ENCODE measurements at regions of chr1 and their contacts with region 1.

Region 1: GRCh38 chr1:27203946-27204345 is 30.5 kb upstream of the WDTC1 start:
- DNase-seq: no peak
- H3K4me3 ChIP-seq: no peak overlapping the region
- H3K27ac ChIP-seq: no peak overlapping the region
- H3K4me1 ChIP-seq: peaks cover 0 to 3% (median 0%) of the 10 kb centered on the region in 4 experiments
- H3K27me3 ChIP-seq: no peaks in the 10 kb centered on the region

Region 2: GRCh38 chr1:27284425-27285273 is 80.7 kb after region 1 on chr1:
- CTCF ChIA-PET with region 1: interaction called, 10 read pairs
- POLR2A ChIA-PET with region 1: no interaction called
- DNase-seq: peak; percentile 81 to 92 (median 87)
- H3K4me3 ChIP-seq: no peak overlapping the region
- H3K27ac ChIP-seq: no peak overlapping the region
- H3K4me1 ChIP-seq: no peaks in the 10 kb centered on the region
- H3K27me3 ChIP-seq: no peaks in the 10 kb centered on the region

Measured in common myeloid progenitor, CD34-positive (primary cell).